Naive thymus-derived CD8-positive, alpha-beta T cell (primary cell): ENCODE measurements at regions of chr6 and their contacts with region 1.

Region 1: DNA sequence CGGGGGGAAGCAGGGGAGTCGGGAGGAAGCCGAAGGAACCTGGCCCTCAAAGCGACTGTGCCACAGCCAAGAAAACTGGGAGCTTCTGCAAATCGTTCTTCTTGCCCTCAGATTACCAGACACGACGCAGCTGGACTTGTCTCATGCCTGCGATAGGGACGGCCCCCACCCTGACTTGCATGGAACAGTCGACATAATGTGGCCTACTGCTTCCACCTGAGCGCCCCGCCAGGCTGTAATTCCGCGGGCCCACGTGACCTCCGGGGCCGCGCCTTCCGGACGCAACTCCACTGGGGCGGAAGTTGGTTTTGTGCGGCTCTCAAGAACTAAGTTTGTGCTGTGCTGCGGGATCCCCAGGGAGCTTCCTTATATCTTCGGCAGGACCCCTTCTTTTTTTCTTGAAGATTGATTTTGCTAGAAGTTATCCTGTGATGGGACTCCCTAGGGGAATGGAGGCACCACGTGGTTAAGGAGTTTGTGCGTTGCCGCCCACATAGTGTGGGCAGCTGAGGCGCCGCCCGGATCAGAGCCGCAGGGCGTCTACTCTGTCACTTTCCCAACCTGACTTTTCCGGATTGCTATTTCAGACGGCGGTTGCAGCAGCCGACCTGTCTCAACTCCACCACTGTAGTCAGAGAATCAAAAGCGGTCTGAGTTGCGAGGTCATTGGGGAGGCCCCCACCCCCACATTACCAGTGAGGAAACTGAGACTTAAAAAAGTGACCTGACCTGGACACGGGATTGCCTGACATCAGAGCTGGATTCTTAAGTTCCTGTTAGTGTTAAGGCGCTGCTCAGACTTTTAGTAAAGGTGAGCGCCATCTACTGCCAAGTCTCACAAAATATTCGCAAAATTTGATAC is 540 bp upstream of the CD164 start:
- DNase-seq: peak; percentile 84 to 98 (median 92)
- ATAC-seq: peak; percentile 72 to 73
- H3K4me3 Mint-ChIP-seq: peak overlapping the region; percentile 94 to 99 (median 98)
- H3K27ac Mint-ChIP-seq: peak overlapping the region; percentile 94 to 100 (median 99)
- H3K4me1 Mint-ChIP-seq: peaks cover 18 to 56% (median 45%) of the 10 kb centered on the region in 4 donors
- H3K27me3 Mint-ChIP-seq: no peaks in the 10 kb centered on the region

Region 2: GRCh38 chr6:108558372-108559096 is 824.3 kb before region 1 on chr6:
- POLR2A ChIA-PET with region 1: interaction called, 11 read pairs
- DNase-seq: peak; percentile 94 to 99 (median 96)
- ATAC-seq: peak; percentile 67 to 74
- H3K4me3 Mint-ChIP-seq: peak overlapping the region; percentile 90 to 98 (median 96)
- H3K27ac Mint-ChIP-seq: peak overlapping the region; percentile 93 to 100 (median 98)
- H3K4me1 Mint-ChIP-seq: peaks cover 13 to 33% (median 22%) of the 10 kb centered on the region in 4 donors
- H3K27me3 Mint-ChIP-seq: peaks cover 0 to 6% (median 0%) of the 10 kb centered on the region in 5 donors

Region 3: DNA sequence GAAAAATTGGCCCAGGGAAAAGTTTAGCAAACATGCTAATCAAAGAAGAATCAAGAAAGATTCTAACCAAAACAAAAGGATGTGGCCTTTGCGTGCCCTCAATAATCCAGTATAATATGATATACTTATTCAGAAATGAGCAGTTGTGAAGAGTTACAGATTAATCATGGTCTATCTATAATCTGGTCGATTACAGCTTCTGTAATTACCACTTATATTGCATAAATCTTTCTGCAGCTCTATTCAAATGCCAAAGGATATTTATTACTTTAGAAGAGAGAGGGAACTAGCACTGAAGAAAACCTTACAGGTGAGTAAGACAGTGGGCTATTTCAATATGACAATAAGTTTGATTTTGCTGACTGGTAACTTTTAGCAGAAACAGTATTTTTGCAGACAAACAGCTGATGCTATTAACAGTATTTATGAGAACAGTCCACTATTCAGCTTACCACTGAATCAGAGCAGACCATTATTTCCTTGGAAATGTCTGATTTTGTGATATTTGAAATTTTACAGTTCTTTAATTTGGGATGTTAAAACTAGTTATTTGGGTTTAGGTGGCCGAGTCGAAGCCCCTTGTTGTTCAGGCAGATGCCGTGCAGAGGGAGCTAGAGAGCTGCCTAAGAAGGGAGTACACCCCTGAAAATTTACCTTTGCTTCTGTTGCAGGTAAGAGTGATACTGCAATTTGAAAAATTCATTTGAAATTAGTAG is 195.2 kb before region 1 on chr6:
- POLR2A ChIA-PET with region 1: interaction called, 32 read pairs
- DNase-seq: peak; percentile 33 to 80 (median 60)
- ATAC-seq: peak; percentile 83 to 84
- H3K4me3 Mint-ChIP-seq: no peak overlapping the region
- H3K27ac Mint-ChIP-seq: peak overlapping the region in 1 of 10 donors; percentile 34
- H3K4me1 Mint-ChIP-seq: peaks cover 0 to 22% (median 0%) of the 10 kb centered on the region in 4 donors
- H3K27me3 Mint-ChIP-seq: peaks cover 3 to 16% (median 7%) of the 10 kb centered on the region in 5 donors

Region 4: DNA sequence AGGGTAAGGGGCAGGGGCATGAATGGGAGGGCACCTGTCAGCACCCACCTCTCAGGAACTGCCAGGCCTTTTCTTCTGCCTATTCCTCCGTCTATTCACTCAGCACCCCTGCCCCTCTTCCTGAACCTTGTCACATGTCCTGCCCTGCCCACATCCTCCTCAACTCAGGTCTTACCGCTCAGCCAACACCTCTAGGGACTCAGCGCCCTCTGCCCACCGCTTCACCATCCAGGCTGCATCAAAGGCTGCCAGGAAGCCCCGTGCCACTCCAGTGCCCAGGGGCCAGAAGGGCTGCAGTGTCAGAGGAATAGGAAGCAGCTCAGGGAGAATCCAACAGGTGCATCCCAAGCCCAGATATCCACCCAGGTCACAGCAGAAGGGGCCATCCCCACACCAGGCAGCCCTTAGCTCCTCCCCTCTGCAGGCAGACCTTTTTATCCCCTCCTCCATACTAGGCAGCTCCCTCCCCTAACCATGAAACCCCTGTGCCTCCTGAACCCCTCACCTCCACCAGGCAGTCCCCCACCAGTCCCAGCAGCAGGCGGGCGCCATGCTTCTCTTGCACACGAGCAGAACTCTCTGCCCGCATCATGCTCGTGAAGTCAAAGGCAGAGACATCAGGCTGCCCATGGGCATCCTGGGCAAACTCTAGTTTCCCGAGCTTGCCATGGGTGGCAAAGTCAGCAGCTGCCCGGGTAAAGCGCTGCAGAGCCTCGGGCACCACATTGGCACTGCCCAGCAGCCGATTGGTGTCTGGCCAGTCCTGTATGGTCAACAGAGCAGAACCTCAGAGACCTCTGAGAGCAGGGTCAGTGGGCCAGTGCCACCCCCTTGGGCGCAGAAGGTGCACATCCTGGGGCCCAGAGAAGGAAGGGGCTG is 67.2 kb after region 1 on chr6:
- POLR2A ChIA-PET with region 1: interaction called, 68 read pairs
- DNase-seq: peak in 7 of 10 donors; percentile 35 to 77 (median 55)
- ATAC-seq: peak; percentile 48 to 49
- H3K4me3 Mint-ChIP-seq: peak overlapping the region; percentile 34 to 83 (median 60)
- H3K27ac Mint-ChIP-seq: peak overlapping the region; percentile 71 to 92 (median 85)
- H3K4me1 Mint-ChIP-seq: peaks cover 36 to 72% (median 70%) of the 10 kb centered on the region in 4 donors
- H3K27me3 Mint-ChIP-seq: no peaks in the 10 kb centered on the region

Region 5: DNA sequence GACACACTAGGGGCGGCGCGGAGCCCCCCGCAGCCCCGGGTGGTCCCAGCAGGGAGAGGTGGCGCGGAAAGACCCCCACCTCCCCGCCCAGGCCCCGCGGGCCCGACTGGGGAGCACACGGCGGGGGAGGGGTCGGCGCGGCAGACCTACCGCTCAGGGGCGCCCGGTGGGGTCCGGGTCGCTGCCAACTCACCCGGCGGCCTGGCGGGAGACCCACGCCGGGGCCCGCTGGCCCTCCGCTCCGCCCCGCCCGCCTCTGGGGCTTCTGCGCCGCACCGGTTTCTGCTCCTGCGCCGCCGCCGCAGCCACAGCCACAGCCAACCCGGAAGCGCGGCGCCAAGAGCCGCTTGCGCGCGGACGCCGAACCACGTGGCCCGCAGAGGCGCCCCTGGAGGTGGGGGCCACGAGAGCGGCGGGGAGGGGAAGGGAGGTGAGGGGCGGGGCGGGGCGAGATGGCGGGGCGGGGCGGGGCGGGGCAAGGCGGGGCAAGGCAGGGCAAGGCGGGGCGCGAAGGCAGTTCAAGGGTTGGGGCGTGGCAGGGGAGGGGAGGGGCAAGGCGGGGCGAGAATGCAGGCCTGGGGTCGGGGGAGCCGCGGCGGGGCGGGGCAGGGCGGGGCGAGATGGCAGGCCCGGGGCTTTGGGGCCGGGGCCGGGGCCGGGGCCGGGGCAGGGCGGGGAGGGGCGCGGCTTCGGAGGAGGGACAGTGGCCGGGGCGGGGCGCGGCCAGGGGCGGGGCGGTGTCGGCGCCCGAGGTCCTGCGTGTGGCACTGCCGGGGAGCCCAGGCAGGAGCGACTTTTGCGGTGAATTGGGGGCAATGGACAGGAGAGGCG is 100.3 kb after region 1 on chr6 and contains the start of gene ZBTB24:
- POLR2A ChIA-PET with region 1: interaction called, 19 read pairs
- DNase-seq: peak; percentile 79 to 94 (median 88)
- ATAC-seq: peak; percentile 86 to 87
- H3K4me3 Mint-ChIP-seq: peak within 1 kb of the TSS; percentile 82 to 98 (median 94)
- H3K27ac Mint-ChIP-seq: peak within 1 kb of the TSS; percentile 88 to 95 (median 93)
- H3K4me1 Mint-ChIP-seq: peaks cover 34 to 56% (median 51%) of the 10 kb centered on the region in 4 donors
- H3K27me3 Mint-ChIP-seq: no peaks in the 10 kb centered on the region
- polyA plus RNA-seq, gene ZBTB24: 6.6 to 8.8 (median 8.2) TPM

Region 6: GRCh38 chr6:109690737-109691621 is 308.2 kb after region 1 on chr6 and contains the starts of genes AK9 and FIG4:
- POLR2A ChIA-PET with region 1: interaction called, 15 read pairs
- DNase-seq: peak; percentile 78 to 93 (median 85)
- ATAC-seq: peak; percentile 94 to 95
- H3K4me3 Mint-ChIP-seq: peak within 1 kb of the TSS; percentile 88 to 99 (median 96)
- H3K27ac Mint-ChIP-seq: peak within 1 kb of the TSS; percentile 92 to 99 (median 97)
- H3K4me1 Mint-ChIP-seq: peaks cover 10 to 43% (median 33%) of the 10 kb centered on the region in 4 donors
- H3K27me3 Mint-ChIP-seq: no peaks in the 10 kb centered on the region
- polyA plus RNA-seq, gene AK9: 4.3 to 7.4 (median 5.9) TPM
- polyA plus RNA-seq, gene FIG4: 14.1 to 18.7 (median 16.7) TPM